GM12878 (cell line): ENCODE measurements at regions of chr2 and their contacts with region 1.

Region 1: GRCh38 chr2:156526950-156527636 is 90.9 kb downstream of the GPD2 start:
- DNase-seq: no peak
- ATAC-seq: peak; percentile 94
- H3K4me3 ChIP-seq: no peak overlapping the region
- H3K27ac ChIP-seq: peak overlapping the region; percentile 81
- H3K4me1 ChIP-seq: peaks cover 16% of the 10 kb centered on the region
- H3K27me3 ChIP-seq: no peaks in the 10 kb centered on the region
- CTCF ChIP-seq: no peak
- EP300 ChIP-seq: peak; percentile 96 to 99
- POLR2A ChIP-seq: no peak
- RAD21 ChIP-seq: no peak

Region 2: GRCh38 chr2:156038021-156038420 is 489.1 kb before region 1 on chr2:
- CTCF ChIA-PET with region 1: no interaction called
- POLR2A ChIA-PET with region 1: no interaction called
- RAD21 ChIA-PET with region 1: no interaction called
- SMC1A ChIA-PET with region 1: no interaction called
- in situ Hi-C with region 1: no loop called
- intact Hi-C with region 1: no loop called
- DNase-seq: no peak
- ATAC-seq: no peak
- H3K4me3 ChIP-seq: no peak overlapping the region
- H3K27ac ChIP-seq: no peak overlapping the region
- H3K4me1 ChIP-seq: no peaks in the 10 kb centered on the region
- H3K27me3 ChIP-seq: no peaks in the 10 kb centered on the region; a peak in 1 of 4 replicates
- CTCF ChIP-seq: no peak
- EP300 ChIP-seq: no peak
- POLR2A ChIP-seq: no peak
- RAD21 ChIP-seq: no peak

Region 3: GRCh38 chr2:156511803-156512202 is 15.3 kb before region 1 on chr2:
- CTCF ChIA-PET with region 1: interaction called, 13 read pairs
- POLR2A ChIA-PET with region 1: interaction called, 11 read pairs
- RAD21 ChIA-PET with region 1: interaction called, 13 read pairs
- SMC1A ChIA-PET with region 1: interaction called, 19 read pairs
- in situ Hi-C with region 1: no loop called
- intact Hi-C with region 1: no loop called
- DNase-seq: no peak
- ATAC-seq: peak; percentile 79
- H3K4me3 ChIP-seq: no peak overlapping the region
- H3K27ac ChIP-seq: peak overlapping the region; percentile 45; the same call in 1 of the 2 replicates
- H3K4me1 ChIP-seq: peaks cover 23% of the 10 kb centered on the region
- H3K27me3 ChIP-seq: no peaks in the 10 kb centered on the region
- CTCF ChIP-seq: no peak
- EP300 ChIP-seq: 0 out of 4 replicates have a peak, but pooled peaks have one; percentile 13 to 34
- POLR2A ChIP-seq: no peak
- RAD21 ChIP-seq: no peak

Region 4: DNA sequence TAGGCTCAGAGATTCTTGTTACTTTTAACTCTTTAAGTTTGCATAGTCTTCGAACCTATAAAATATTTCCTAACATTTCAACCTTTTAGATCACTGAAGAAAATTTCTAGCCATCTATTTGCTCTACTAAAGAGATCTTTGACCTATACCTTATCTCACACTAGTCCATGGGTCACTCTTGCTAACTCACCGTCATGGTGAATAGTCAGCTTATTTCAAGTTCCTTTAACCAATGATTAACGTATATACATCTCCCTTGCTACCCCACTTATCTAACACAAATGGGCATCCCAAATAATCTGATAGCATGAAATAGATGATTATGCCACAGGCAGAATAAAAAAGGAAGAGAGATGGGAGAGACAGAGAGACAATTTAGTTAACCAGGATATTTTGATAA is 212.2 kb after region 1 on chr2:
- CTCF ChIA-PET with region 1: no interaction called
- POLR2A ChIA-PET with region 1: no interaction called
- RAD21 ChIA-PET with region 1: no interaction called
- SMC1A ChIA-PET with region 1: no interaction called
- in situ Hi-C with region 1: no loop called
- intact Hi-C with region 1: no loop called
- DNase-seq: no peak
- ATAC-seq: no peak
- H3K4me3 ChIP-seq: no peak overlapping the region
- H3K27ac ChIP-seq: no peak overlapping the region
- H3K4me1 ChIP-seq: no peaks in the 10 kb centered on the region
- H3K27me3 ChIP-seq: no peaks in the 10 kb centered on the region
- CTCF ChIP-seq: no peak
- EP300 ChIP-seq: no peak
- POLR2A ChIP-seq: no peak
- RAD21 ChIP-seq: no peak

Region 5: GRCh38 chr2:156810094-156810493 is 283.0 kb after region 1 on chr2:
- CTCF ChIA-PET with region 1: no interaction called
- POLR2A ChIA-PET with region 1: no interaction called
- RAD21 ChIA-PET with region 1: no interaction called
- SMC1A ChIA-PET with region 1: no interaction called
- in situ Hi-C with region 1: no loop called
- intact Hi-C with region 1: no loop called
- DNase-seq: no peak
- ATAC-seq: no peak
- H3K4me3 ChIP-seq: no peak overlapping the region
- H3K27ac ChIP-seq: no peak overlapping the region
- H3K4me1 ChIP-seq: no peaks in the 10 kb centered on the region
- H3K27me3 ChIP-seq: no peaks in the 10 kb centered on the region
- CTCF ChIP-seq: no peak
- EP300 ChIP-seq: no peak
- POLR2A ChIP-seq: no peak
- RAD21 ChIP-seq: no peak